A673 (cell line): ENCODE measurements at regions of chr14 and their contacts with region 1.

Region 1: GRCh38 chr14:29971101-29971500 is 43.5 kb upstream of the PRKD1 start:
- DNase-seq: no peak
- H3K4me3 ChIP-seq: no peak overlapping the region
- H3K27ac ChIP-seq: no peak overlapping the region
- H3K4me1 ChIP-seq: no peaks in the 10 kb centered on the region
- H3K27me3 ChIP-seq: no peaks in the 10 kb centered on the region
- CTCF ChIP-seq: no peak

Region 2: GRCh38 chr14:29410581-29410980 is 560.5 kb before region 1 on chr14:
- CTCF ChIA-PET with region 1: no interaction called
- POLR2A ChIA-PET with region 1: interaction called, 13 read pairs
- intact Hi-C with region 1: no loop called
- DNase-seq: no peak
- H3K4me3 ChIP-seq: no peak overlapping the region
- H3K27ac ChIP-seq: no peak overlapping the region
- H3K4me1 ChIP-seq: no peaks in the 10 kb centered on the region
- H3K27me3 ChIP-seq: no peaks in the 10 kb centered on the region
- CTCF ChIP-seq: no peak